ENCODE measurements at regions of chr15 and their contacts with region 1.

Region 1: DNA sequence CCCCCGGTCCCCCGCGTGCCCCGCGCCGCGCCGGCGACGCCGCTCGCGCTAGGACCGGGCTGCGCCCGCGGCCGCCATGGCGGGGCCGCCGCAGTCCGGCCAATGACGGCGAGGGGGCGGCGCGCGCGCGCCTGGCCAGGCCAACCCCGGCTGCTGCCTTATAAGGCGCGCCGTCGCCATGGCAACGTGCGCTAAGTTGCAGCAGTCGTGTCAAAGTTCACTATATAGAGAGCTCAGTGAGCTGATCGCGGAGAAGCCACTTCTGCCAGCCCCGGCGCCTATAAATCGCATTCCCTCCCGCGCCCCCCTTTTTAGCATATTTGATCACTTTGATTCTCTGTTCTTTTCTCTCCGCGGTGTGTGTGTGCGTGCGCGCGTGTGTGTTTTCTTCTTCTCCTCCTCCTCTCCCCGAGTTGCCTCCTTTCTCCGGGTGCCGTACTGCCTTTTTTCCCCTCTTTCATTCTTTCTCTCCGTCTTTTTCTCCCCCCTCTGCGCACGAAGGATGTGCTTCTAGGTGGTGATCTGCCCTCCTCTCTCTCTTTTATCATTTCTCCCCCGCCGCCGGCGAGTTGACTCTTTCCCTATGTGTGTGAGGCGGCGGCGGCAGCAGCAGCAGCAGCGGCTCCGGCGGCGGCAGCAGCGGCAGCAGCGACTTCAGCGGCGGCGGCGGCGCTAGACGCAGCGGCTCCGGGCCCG is at the start of gene NR2F2:
- DNase-seq: peak; percentile 99
- H3K4me3 ChIP-seq: peak within 1 kb of the TSS; percentile 85
- H3K27ac ChIP-seq: peak within 1 kb of the TSS; percentile 98
- H3K27me3 ChIP-seq: no peaks in the 10 kb centered on the region
- CTCF ChIP-seq: no peak
- polyA plus RNA-seq, gene NR2F2: 63.1 and 66.9 TPM in 2 replicates

Region 2: GRCh38 chr15:95259513-95259912 is 1071.1 kb before region 1 on chr15:
- CTCF ChIA-PET with region 1: interaction called, 23 read pairs
- POLR2A ChIA-PET with region 1: no interaction called
- DNase-seq: peak; percentile 62
- H3K4me3 ChIP-seq: no peak overlapping the region
- H3K27ac ChIP-seq: no peak overlapping the region
- H3K27me3 ChIP-seq: no peaks in the 10 kb centered on the region
- CTCF ChIP-seq: peak; percentile 82

Region 3: DNA sequence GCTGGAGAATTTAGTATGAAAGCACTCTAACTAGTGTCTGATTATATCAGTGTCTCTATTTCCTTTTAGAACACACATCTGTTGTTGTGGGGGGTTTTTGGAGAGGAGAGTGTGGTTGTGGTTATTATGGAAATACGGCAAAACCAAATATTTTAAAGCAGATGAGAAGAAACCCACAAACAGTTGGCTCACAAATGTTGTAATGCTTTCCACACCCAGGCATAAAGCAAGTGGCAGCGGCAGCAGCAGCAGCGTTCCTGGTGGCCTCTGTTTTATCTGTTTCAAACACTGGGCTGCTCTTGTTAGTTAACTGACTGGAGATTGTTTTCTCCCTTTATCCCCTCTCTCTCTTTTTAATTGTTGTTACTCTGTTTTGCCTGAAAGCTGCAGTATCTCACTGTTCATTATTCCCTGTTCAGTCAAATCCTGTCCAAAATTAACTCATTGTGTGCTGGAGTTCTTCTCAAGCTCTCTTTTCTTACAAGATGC is 1045.6 kb before region 1 on chr15:
- CTCF ChIA-PET with region 1: interaction called, 34 read pairs
- POLR2A ChIA-PET with region 1: interaction called, 5 read pairs
- DNase-seq: no peak
- H3K4me3 ChIP-seq: no peak overlapping the region
- H3K27ac ChIP-seq: no peak overlapping the region
- H3K27me3 ChIP-seq: no peaks in the 10 kb centered on the region
- CTCF ChIP-seq: peak; percentile 28; the same call in 1 of the 2 replicates

Region 4: DNA sequence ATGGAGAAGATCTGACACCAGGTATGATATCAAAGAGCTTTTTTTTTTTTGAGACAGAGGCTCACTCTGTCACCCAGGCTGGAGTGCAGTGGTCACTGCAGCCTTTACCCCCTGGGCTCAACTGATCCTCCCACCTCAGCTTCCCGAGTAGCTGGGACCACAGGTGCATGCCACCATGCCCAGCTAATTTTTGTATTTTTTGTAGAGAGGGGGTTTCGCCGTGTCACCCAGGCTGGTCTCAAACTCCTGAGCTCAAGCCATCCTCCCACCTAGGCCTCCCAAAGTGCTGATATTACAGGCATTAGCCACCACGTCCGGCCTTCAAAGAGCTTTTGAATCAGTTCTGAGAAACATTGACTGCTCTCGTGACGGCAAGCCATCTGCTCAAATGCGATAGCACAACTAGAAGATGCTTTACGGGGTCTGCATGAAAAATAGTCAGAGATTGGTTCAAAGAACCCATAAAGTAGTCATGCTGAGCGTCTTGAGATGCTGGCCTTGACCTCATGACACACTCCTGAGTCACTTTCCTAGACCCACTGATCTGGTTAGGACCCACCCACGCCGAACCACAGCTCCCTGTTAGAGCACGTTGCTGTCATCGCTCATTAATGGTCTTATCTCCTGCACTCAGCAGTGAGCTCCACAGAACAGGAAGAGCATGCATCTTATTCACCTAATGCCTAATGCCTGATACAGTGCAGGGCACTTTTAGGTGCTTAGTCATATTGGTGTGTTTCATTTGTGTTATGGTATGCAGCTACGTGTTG is 57.1 kb before region 1 on chr15:
- CTCF ChIA-PET with region 1: interaction called, 10 read pairs
- POLR2A ChIA-PET with region 1: interaction called, 9 read pairs
- DNase-seq: peak; percentile 95
- H3K4me3 ChIP-seq: no peak overlapping the region; the same call in 1 of the 2 replicates
- H3K27ac ChIP-seq: peak overlapping the region; percentile 85
- H3K27me3 ChIP-seq: no peaks in the 10 kb centered on the region
- CTCF ChIP-seq: no peak

Region 5: DNA sequence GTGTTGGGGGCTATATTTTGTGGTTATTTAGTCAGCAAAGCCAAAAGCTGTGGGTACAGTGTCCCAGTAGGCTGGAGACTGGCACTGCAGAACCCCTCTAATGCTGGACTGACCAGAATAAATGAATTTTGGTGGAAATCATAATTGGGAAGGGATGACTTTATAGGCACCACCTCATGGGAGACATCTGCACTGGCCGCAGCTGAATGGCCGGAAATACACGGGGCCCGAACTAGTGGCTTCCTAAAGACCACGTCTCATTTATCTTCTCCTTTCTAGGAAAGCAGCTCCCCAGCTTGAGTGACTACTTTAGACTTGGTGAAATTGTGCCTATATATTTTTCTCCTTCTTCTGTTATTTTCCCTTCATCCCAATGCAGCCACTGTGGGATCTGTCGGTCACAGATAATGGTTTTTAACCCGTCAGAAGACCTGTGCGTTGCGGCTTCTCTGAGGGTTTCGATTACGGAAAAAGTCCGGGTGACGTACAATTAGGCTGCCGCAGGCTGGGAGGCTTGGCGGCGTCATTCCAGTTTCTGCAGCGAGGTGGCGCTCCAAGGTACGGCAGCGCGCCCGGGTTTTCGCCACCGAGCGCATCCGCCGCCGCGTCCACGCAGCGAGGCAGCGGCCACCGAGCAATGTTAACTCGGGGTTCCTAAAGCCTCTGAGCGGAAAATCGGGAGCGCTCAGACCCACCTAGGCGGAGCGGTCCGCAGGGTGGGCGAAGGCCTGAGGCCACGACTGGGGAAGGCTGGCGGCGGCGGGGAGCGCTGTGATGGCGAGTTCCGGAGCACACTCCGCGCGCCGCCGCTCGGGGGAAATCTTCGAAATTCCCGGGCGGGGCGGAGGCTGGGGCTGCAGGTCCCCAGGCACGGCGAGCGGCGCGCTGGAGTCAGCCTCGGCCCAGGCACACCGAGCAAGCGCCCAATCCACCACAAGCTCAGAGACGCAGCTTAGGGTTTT is 26.2 kb after region 1 on chr15:
- CTCF ChIA-PET with region 1: interaction called, 33 read pairs
- POLR2A ChIA-PET with region 1: interaction called, 5 read pairs
- DNase-seq: peak; percentile 65
- H3K4me3 ChIP-seq: peak overlapping the region; percentile 71
- H3K27ac ChIP-seq: peak overlapping the region; percentile 73
- H3K27me3 ChIP-seq: no peaks in the 10 kb centered on the region
- CTCF ChIP-seq: peak; percentile 87

Measured in AG04450 (cell line).